ENCODE measurements at regions of chr13 and their contacts with region 1.

Region 1: GRCh38 chr13:79501538-79502232 is 20.7 kb downstream of the NDFIP2 start:
- DNase-seq: no peak
- ATAC-seq: no peak
- H3K4me3 Mint-ChIP-seq: no peak overlapping the region
- H3K27ac Mint-ChIP-seq: no peak overlapping the region
- H3K4me1 Mint-ChIP-seq: peaks cover 54% of the 10 kb centered on the region
- H3K27me3 Mint-ChIP-seq: no peaks in the 10 kb centered on the region

Region 2: GRCh38 chr13:79349011-79349410 is 152.7 kb before region 1 on chr13:
- CTCF ChIA-PET with region 1: no interaction called
- POLR2A ChIA-PET with region 1: no interaction called
- DNase-seq: no peak
- ATAC-seq: no peak
- H3K4me3 Mint-ChIP-seq: no peak overlapping the region
- H3K27ac Mint-ChIP-seq: no peak overlapping the region
- H3K4me1 Mint-ChIP-seq: peaks cover 18% of the 10 kb centered on the region
- H3K27me3 Mint-ChIP-seq: no peaks in the 10 kb centered on the region

Region 3: DNA sequence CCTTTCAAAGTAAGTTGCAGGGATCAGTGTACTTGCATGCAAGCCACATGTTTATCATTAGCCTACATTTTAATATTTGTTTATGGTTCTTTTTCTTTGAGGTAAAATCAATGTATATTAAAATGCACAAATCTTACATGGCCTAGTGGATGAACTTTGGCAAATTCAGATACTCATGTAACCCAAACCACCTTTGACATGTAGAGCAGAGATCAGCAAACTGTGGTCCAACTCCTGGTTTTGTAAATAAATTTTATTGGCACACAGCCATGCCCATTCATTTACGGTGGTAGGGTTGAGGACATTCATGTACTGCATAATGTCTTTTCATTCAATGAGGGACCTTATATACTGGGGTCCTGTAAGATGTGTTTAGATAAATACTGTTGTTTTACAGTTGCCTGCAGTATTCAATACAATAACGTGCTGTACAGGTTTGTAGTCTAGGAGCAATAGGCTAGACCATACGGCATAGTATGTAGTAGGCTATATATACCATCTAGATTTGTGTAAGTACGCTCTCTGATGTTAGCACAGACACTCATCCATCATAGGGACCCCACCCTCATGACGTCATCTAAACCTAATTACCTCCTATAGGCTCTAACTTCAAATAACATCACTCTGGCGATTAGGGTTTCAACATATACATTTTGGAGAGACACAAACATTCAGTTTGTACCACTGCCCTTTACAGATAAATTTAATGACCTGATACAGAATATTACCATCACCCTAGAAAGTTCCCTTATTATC is 15.1 kb before region 1 on chr13:
- CTCF ChIA-PET with region 1: interaction called, 25 read pairs
- POLR2A ChIA-PET with region 1: interaction called, 3 read pairs
- DNase-seq: no peak
- ATAC-seq: no peak
- H3K4me3 Mint-ChIP-seq: no peak overlapping the region
- H3K27ac Mint-ChIP-seq: no peak overlapping the region
- H3K4me1 Mint-ChIP-seq: peaks cover 66% of the 10 kb centered on the region
- H3K27me3 Mint-ChIP-seq: no peaks in the 10 kb centered on the region

Region 4: DNA sequence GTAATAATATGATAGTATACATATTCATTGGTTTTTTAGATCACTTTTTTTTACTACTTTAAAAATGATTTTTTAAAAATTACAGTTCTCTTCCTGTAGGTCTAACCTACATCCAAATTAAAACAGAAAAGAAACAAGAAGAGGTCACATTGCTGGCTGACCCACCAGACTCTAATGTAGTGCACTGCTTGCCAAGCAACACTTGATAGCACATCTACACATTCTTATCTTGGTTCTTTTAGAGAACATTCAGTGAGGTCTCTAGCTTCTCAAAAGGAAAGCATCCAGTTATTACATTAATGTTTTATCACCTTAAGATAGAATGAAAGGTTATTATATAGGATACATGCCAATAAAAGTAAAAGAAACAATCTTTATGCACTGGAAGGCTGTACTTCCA is 14.9 kb after region 1 on chr13:
- CTCF ChIA-PET with region 1: interaction called, 34 read pairs
- POLR2A ChIA-PET with region 1: no interaction called
- DNase-seq: no peak
- ATAC-seq: no peak
- H3K4me3 Mint-ChIP-seq: no peak overlapping the region
- H3K27ac Mint-ChIP-seq: no peak overlapping the region
- H3K4me1 Mint-ChIP-seq: peaks cover 49% of the 10 kb centered on the region
- H3K27me3 Mint-ChIP-seq: no peaks in the 10 kb centered on the region

Region 5: DNA sequence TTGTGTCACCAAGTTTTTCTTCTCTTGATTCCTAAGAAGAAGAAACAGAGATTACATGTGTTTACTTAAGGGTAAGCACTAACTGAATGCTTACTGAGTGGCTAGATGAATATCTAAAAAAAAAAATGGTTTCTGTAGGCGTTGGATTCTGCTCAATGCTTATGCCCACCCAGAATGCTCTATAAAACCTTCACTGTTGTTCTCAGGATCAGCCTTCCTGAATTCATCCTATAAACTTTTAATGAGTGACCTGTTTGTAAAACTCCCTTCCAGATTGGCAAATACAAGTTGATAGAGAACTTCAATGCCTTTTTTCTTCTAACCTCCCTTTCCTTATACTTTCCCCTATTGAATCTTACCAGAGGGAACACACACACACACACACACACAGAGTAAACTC is 69.5 kb after region 1 on chr13:
- CTCF ChIA-PET with region 1: no interaction called
- POLR2A ChIA-PET with region 1: no interaction called
- DNase-seq: no peak
- ATAC-seq: no peak
- H3K4me3 Mint-ChIP-seq: no peak overlapping the region
- H3K27ac Mint-ChIP-seq: no peak overlapping the region
- H3K4me1 Mint-ChIP-seq: no peaks in the 10 kb centered on the region
- H3K27me3 Mint-ChIP-seq: no peaks in the 10 kb centered on the region

Region 6: GRCh38 chr13:79846386-79846785 is 344.7 kb after region 1 on chr13:
- CTCF ChIA-PET with region 1: no interaction called
- POLR2A ChIA-PET with region 1: no interaction called
- DNase-seq: no peak
- ATAC-seq: no peak
- H3K4me3 Mint-ChIP-seq: no peak overlapping the region
- H3K27ac Mint-ChIP-seq: no peak overlapping the region
- H3K4me1 Mint-ChIP-seq: no peaks in the 10 kb centered on the region
- H3K27me3 Mint-ChIP-seq: no peaks in the 10 kb centered on the region